Caco-2 (cell line): ENCODE measurements at regions of chr9 and their contacts with region 1.

Region 1: DNA sequence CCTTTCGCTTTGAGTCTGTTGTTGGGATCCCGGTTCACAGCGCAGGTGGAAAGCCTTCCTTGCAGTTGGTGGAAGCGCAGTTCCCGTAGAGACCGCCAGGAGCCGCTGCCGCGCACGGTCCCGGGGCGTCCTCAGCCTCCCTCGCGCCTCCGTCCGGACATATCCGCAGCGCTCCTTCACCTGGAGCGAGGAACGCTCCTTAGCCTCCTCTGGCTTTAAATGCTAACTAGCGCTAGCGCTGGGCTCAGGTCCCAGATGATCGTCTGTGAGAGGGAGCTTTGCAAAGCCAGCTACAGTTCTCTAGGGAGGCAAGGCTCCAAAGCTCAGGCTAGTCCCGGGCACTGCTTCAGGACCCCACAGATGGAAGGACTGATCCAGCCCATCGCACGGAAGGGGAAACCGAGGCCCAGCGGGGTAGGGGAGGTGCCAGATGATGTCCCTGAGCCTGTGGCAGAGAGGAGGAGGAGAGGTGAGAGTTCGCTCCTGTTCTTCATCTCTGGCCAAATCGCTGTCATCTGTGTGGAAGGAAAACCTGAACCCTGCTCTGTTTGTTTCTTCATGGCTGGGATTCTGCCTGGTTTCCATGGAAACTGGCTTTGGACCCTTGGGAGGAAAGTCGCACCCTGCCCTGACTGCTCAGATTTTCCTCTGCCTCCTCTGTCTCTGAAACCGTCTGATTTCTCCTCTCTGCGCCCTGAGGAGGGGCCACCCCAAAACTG is 31.4 kb downstream of the COL15A1 start:
- DNase-seq: peak; percentile 80 to 89
- H3K4me3 ChIP-seq: no peak overlapping the region
- H3K4me3 Mint-ChIP-seq: no peak overlapping the region
- H3K27ac Mint-ChIP-seq: no peak overlapping the region
- H3K4me1 ChIP-seq: no peaks in the 10 kb centered on the region
- H3K4me1 Mint-ChIP-seq: no peaks in the 10 kb centered on the region
- H3K27me3 ChIP-seq: peaks cover 2% of the 10 kb centered on the region; the same call in 1 of the 2 replicates
- H3K27me3 Mint-ChIP-seq: peaks cover 17% of the 10 kb centered on the region
- CTCF ChIP-seq: peak; percentile 97 to 98

Region 2: DNA sequence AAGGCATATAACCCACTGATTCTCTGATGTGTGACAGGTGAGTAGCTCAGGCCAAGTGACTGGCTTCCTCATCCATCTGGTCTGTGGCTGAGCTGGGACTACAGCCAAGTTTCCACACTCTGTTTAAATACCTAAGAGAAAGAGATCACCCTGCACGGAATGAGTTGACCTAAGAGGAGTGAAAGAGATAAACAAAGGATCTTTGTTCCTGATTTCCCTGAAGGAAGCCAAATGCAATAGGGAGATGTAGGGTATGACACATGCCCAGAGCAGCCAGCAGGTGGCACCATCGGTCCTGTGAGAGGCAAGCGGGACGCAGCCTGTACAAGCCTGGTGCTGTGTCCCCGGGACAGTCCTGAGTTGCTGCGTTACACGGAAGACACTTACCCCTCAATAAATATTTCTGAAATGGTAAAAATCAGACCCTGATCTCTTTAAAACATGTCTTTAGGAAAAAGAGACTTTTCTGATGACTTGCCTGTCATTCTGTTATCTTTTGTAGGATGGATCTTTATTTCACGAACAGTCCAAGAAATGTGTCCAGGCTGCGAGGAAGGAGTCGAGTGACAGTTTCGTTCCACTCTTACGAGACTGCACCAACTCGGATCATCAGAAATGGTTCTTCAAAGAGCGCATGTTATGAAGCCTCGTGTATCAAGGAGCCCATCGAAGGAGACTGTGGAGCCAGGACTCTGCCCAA is 126.6 kb before region 1 on chr9:
- CTCF ChIA-PET with region 1: no interaction called
- POLR2A ChIA-PET with region 1: no interaction called
- intact Hi-C with region 1: loop called (anchors 1 kb)
- DNase-seq: peak; percentile 88
- H3K4me3 ChIP-seq: no peak overlapping the region
- H3K4me3 Mint-ChIP-seq: peak overlapping the region; percentile 41
- H3K27ac Mint-ChIP-seq: no peak overlapping the region
- H3K4me1 ChIP-seq: peaks cover 14% of the 10 kb centered on the region
- H3K4me1 Mint-ChIP-seq: peaks cover 23% of the 10 kb centered on the region
- H3K27me3 ChIP-seq: no peaks in the 10 kb centered on the region
- H3K27me3 Mint-ChIP-seq: no peaks in the 10 kb centered on the region
- CTCF ChIP-seq: peak; percentile 92 to 94